Naive thymus-derived CD4-positive, alpha-beta T cell (primary cell): ENCODE measurements at regions of chr18 and their contacts with region 1.

Region 1: GRCh38 chr18:5237723-5238370 is 40.8 kb upstream of the AKAIN1 start:
- DNase-seq: peak; percentile 81 to 97 (median 92)
- ATAC-seq: peak; percentile 93
- H3K4me3 ChIP-seq: peak overlapping the region; percentile 89
- H3K4me3 Mint-ChIP-seq: peak overlapping the region; percentile 93 to 98 (median 96)
- H3K27ac ChIP-seq: peak overlapping the region; percentile 90
- H3K27ac Mint-ChIP-seq: peak overlapping the region; percentile 97 to 99 (median 98)
- H3K4me1 ChIP-seq: peaks cover 13 to 16% of the 10 kb centered on the region in 2 donors
- H3K4me1 Mint-ChIP-seq: peaks cover 16 to 76% (median 45%) of the 10 kb centered on the region in 7 donors
- H3K27me3 ChIP-seq: no peaks in the 10 kb centered on the region
- H3K27me3 Mint-ChIP-seq: peaks cover 0 to 7% (median 0%) of the 10 kb centered on the region in 5 donors

Region 2: DNA sequence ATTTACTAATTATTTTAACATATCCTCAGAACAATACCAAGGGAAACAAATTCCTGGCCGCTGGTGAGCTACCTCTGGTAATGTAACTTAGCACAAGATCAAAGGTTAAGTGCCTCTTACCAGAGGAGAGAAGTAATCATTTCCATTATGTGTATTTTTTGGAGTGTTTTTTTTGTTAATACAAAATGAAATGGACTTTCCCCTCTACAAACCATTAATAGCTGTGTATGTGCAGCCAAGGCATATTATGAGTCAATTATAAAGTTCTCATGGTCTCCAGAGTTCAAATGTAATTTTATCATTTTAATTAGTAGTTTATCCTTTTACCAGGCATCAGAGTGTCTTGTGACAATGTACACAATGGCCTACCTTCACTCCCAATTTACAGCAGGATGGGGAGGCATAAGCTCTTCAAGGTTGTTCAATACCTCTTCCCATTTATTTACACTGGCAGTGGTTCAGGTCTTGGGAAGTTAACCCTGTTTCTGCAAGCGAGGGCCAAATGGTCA is 1545.7 kb before region 1 on chr18:
- CTCF ChIA-PET with region 1: no interaction called
- POLR2A ChIA-PET with region 1: no interaction called
- intact Hi-C with region 1: no loop called
- DNase-seq: no peak
- ATAC-seq: no peak
- H3K4me3 ChIP-seq: no peak overlapping the region
- H3K4me3 Mint-ChIP-seq: no peak overlapping the region
- H3K27ac ChIP-seq: no peak overlapping the region
- H3K27ac Mint-ChIP-seq: no peak overlapping the region
- H3K4me1 ChIP-seq: no peaks in the 10 kb centered on the region
- H3K4me1 Mint-ChIP-seq: no peaks in the 10 kb centered on the region
- H3K27me3 ChIP-seq: no peaks in the 10 kb centered on the region
- H3K27me3 Mint-ChIP-seq: peaks cover 0 to 16% (median 8%) of the 10 kb centered on the region in 5 donors

Region 3: DNA sequence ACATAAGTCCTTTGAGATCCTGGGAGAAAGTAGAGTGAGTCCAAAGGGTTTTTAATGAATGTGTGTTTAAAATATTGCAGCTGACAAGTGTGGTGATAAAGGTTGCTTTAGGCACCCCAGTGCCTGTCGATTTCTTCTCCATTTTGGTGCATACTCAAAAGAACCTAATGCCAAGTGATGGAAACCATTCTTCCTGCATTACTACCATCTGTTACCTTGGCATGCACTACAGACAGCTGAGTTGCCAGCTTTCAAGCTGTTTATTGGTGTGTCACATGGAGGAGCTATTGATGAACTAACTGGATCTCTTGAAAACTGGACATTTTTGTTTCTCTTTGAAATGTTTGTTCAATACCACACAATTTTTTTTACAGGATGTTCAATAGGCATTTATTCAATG is 390.8 kb before region 1 on chr18:
- CTCF ChIA-PET with region 1: no interaction called
- POLR2A ChIA-PET with region 1: no interaction called
- intact Hi-C with region 1: no loop called
- DNase-seq: no peak
- ATAC-seq: no peak
- H3K4me3 ChIP-seq: no peak overlapping the region
- H3K4me3 Mint-ChIP-seq: no peak overlapping the region
- H3K27ac ChIP-seq: no peak overlapping the region
- H3K27ac Mint-ChIP-seq: no peak overlapping the region
- H3K4me1 ChIP-seq: no peaks in the 10 kb centered on the region
- H3K4me1 Mint-ChIP-seq: no peaks in the 10 kb centered on the region
- H3K27me3 ChIP-seq: no peaks in the 10 kb centered on the region
- H3K27me3 Mint-ChIP-seq: peaks cover 0 to 9% (median 0%) of the 10 kb centered on the region in 5 donors

Region 4: GRCh38 chr18:5167831-5168230 is 70.0 kb before region 1 on chr18:
- CTCF ChIA-PET with region 1: no interaction called
- POLR2A ChIA-PET with region 1: interaction called, 56 read pairs
- intact Hi-C with region 1: no loop called
- DNase-seq: peak in 6 of 9 donors; percentile 32 to 58 (median 43)
- ATAC-seq: peak; percentile 58
- H3K4me3 ChIP-seq: peak overlapping the region; percentile 6
- H3K4me3 Mint-ChIP-seq: peak overlapping the region; percentile 52 to 89 (median 69)
- H3K27ac ChIP-seq: peak overlapping the region; percentile 43
- H3K27ac Mint-ChIP-seq: peak overlapping the region in 8 of 9 donors; percentile 76 to 94 (median 87)
- H3K4me1 ChIP-seq: peaks cover 0 to 30% of the 10 kb centered on the region in 2 donors
- H3K4me1 Mint-ChIP-seq: peaks cover 10 to 54% (median 44%) of the 10 kb centered on the region in 7 donors
- H3K27me3 ChIP-seq: no peaks in the 10 kb centered on the region
- H3K27me3 Mint-ChIP-seq: no peaks in the 10 kb centered on the region

Region 5: DNA sequence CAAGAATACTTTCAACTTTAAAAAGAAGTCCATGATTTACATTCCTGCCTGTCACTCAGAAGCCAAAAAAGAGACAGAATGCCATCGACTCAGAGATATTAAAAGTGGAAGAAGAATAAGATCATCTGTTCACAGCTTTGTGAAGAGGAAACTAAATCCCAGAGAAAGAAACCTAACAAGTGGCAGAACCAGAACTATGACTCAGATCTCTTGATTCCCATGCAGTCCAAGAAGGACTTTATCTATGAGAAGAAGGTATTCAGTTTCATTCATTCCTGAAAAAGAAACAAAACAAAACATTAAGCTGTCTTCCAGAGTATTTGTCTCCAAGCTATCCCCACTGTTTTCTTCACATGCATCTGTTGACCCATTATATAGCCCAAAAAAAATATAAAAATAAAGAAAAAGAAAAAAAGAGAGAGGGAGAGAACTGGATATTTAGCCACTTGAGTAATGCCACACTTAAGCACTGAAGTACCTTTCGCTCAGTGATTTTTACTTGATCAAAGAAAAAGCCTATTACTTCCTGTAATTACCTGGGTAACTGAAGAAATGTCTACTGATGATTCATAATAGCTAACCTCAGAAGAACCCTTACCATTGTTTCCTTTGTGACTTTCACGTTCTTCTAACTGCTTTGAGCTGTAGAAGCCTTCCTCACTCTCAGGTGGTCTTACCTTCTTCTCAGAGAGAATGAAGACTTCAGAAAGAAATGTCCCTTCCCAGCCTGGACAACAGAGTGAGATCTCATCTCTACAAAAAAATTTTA is 23.1 kb before region 1 on chr18:
- CTCF ChIA-PET with region 1: no interaction called
- POLR2A ChIA-PET with region 1: interaction called, 8 read pairs
- intact Hi-C with region 1: loop called in 1 of 2 experiments (anchors 1 kb)
- DNase-seq: peak in 1 of 9 donors; percentile 7
- ATAC-seq: peak; percentile 45
- H3K4me3 ChIP-seq: no peak overlapping the region
- H3K4me3 Mint-ChIP-seq: peak overlapping the region in 1 of 10 donors; percentile 26
- H3K27ac ChIP-seq: no peak overlapping the region
- H3K27ac Mint-ChIP-seq: peak overlapping the region in 2 of 9 donors; percentile 11 to 39
- H3K4me1 ChIP-seq: peaks cover 0 to 2% of the 10 kb centered on the region in 2 donors
- H3K4me1 Mint-ChIP-seq: peaks cover 0 to 27% (median 17%) of the 10 kb centered on the region in 7 donors
- H3K27me3 ChIP-seq: no peaks in the 10 kb centered on the region
- H3K27me3 Mint-ChIP-seq: peaks cover 0 to 3% (median 0%) of the 10 kb centered on the region in 5 donors

Region 6: GRCh38 chr18:5309888-5310470 is 72.1 kb after region 1 on chr18:
- CTCF ChIA-PET with region 1: interaction called, 3 read pairs
- POLR2A ChIA-PET with region 1: interaction called, 6 read pairs
- intact Hi-C with region 1: loop called (anchors 1 kb)
- DNase-seq: peak in 7 of 9 donors; percentile 32 to 67 (median 57)
- ATAC-seq: peak; percentile 92
- H3K4me3 ChIP-seq: peak overlapping the region; percentile 58
- H3K4me3 Mint-ChIP-seq: peak overlapping the region; percentile 71 to 93 (median 85)
- H3K27ac ChIP-seq: peak overlapping the region; percentile 60
- H3K27ac Mint-ChIP-seq: peak overlapping the region; percentile 80 to 97 (median 92)
- H3K4me1 ChIP-seq: peaks cover 7 to 10% of the 10 kb centered on the region in 2 donors
- H3K4me1 Mint-ChIP-seq: peaks cover 16 to 40% (median 32%) of the 10 kb centered on the region in 7 donors
- H3K27me3 ChIP-seq: no peaks in the 10 kb centered on the region
- H3K27me3 Mint-ChIP-seq: peaks cover 0 to 2% (median 0%) of the 10 kb centered on the region in 5 donors

Region 7: DNA sequence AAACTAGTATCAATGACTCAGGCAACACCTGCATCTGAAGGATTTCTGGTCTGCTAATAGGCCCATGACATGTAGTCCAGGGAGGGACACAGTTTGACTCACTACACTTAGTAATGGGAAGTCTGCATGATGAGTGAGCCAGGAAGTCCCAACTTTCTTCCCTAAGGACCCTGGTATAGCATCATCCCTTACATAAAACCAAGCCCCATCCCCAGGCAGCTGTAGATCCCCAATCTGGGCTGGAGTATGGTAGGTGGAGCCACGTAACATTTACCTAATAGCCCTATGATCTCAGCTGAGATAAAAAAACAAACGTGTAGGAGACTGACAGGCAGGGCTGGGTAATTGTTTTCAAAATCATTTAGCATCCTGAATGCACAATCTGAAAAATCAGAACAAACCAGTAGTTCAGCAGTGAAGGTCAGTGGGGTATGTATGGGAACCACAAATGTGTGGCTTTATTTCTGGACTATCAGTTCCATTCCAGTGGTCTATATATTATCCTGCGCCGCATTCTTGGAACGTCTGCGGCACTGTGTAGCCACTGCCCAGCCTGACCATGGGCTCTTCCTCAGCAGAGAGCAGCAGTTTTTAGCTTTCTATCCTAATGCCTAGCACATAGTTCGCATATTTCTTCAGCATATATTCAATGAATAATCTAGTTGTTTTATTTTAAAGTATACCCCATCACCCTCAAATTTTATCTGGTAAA is 272.4 kb after region 1 on chr18:
- CTCF ChIA-PET with region 1: no interaction called
- POLR2A ChIA-PET with region 1: no interaction called
- intact Hi-C with region 1: no loop called
- DNase-seq: no peak
- ATAC-seq: no peak
- H3K4me3 ChIP-seq: no peak overlapping the region
- H3K4me3 Mint-ChIP-seq: no peak overlapping the region
- H3K27ac ChIP-seq: no peak overlapping the region
- H3K27ac Mint-ChIP-seq: no peak overlapping the region
- H3K4me1 ChIP-seq: no peaks in the 10 kb centered on the region
- H3K4me1 Mint-ChIP-seq: peaks cover 0 to 22% (median 9%) of the 10 kb centered on the region in 7 donors
- H3K27me3 ChIP-seq: no peaks in the 10 kb centered on the region
- H3K27me3 Mint-ChIP-seq: peaks cover 2 to 36% (median 14%) of the 10 kb centered on the region in 5 donors

Region 8: GRCh38 chr18:5554629-5555028 is 316.8 kb after region 1 on chr18:
- CTCF ChIA-PET with region 1: no interaction called
- POLR2A ChIA-PET with region 1: no interaction called
- intact Hi-C with region 1: no loop called
- DNase-seq: no peak
- ATAC-seq: no peak
- H3K4me3 ChIP-seq: no peak overlapping the region
- H3K4me3 Mint-ChIP-seq: no peak overlapping the region
- H3K27ac ChIP-seq: no peak overlapping the region
- H3K27ac Mint-ChIP-seq: no peak overlapping the region
- H3K4me1 ChIP-seq: no peaks in the 10 kb centered on the region
- H3K4me1 Mint-ChIP-seq: no peaks in the 10 kb centered on the region
- H3K27me3 ChIP-seq: peaks cover 0 to 2% of the 10 kb centered on the region in 2 donors
- H3K27me3 Mint-ChIP-seq: peaks cover 0 to 29% (median 15%) of the 10 kb centered on the region in 5 donors